Calu3 (cell line): ENCODE measurements at regions of chr3 and their contacts with region 1.

Region 1: GRCh38 chr3:31377045-31377642 is 155.6 kb upstream of the STT3B start:
- DNase-seq: peak; percentile 69
- H3K4me3 Mint-ChIP-seq: no peak overlapping the region
- H3K27ac Mint-ChIP-seq: peak overlapping the region; percentile 3
- H3K4me1 Mint-ChIP-seq: peaks cover 24% of the 10 kb centered on the region
- H3K27me3 Mint-ChIP-seq: no peaks in the 10 kb centered on the region
- CTCF ChIP-seq: no peak

Region 2: DNA sequence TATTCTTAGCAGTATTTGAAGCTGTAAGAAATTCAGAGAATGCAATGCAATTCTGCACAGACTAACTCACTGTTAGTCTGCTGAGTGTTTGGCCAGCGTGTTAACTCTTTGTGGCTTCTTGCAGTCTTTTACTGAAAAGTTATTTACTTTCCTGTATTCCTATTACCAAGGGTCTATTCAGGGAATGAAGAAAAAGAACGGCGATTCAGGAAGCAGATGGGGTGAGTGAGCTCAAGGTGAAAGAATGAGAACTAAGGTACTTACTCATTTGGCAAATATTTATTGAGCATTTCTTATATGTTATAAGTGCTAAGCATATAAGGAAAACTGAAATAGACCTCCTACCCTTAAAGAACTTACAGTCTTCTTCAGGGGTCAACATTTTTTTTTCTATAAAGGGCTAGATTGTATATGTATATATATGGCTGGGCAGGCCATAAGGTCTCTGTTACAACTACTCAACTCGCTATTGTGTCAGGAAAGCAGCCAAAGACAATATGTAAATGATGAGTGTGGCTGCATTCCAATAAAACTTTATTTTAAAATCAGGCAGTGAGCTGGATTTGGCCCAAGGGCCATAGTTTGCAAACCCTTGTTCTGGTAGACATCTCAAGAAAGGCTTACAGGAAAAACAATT is 210.8 kb before region 1 on chr3:
- CTCF ChIA-PET with region 1: no interaction called
- intact Hi-C with region 1: loop called (anchors 10 kb)
- DNase-seq: peak; percentile 22
- H3K4me3 Mint-ChIP-seq: no peak overlapping the region
- H3K27ac Mint-ChIP-seq: no peak overlapping the region
- H3K4me1 Mint-ChIP-seq: peaks cover 25% of the 10 kb centered on the region
- H3K27me3 Mint-ChIP-seq: no peaks in the 10 kb centered on the region
- CTCF ChIP-seq: no peak

Region 3: GRCh38 chr3:31288641-31289100 is 88.5 kb before region 1 on chr3:
- CTCF ChIA-PET with region 1: interaction called, 16 read pairs
- intact Hi-C with region 1: no loop called
- DNase-seq: peak; percentile 80
- H3K4me3 Mint-ChIP-seq: peak overlapping the region; percentile 4
- H3K27ac Mint-ChIP-seq: peak overlapping the region; percentile 39
- H3K4me1 Mint-ChIP-seq: peaks cover 54% of the 10 kb centered on the region
- H3K27me3 Mint-ChIP-seq: no peaks in the 10 kb centered on the region
- CTCF ChIP-seq: no peak

Region 4: DNA sequence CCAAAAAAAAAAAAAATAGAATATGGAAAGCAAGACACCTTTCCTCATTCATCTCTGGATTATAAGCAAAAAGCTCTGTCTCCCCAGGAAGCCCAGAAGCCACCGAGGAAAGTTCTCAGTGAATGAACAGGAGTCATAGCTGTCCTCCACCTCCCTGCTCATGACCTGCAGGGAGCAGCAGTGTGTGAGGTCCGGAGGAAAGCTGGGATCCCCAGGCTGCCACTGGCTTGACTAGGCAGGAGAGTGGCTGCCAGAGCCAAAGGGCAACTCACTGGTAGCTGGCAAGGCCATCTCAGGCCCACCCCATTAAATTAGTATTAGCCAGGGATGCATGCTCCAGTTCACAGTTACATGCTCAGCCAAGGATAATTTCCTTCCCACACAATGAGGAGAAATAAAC is 36.0 kb before region 1 on chr3:
- CTCF ChIA-PET with region 1: no interaction called
- intact Hi-C with region 1: no loop called
- DNase-seq: peak; percentile 9
- H3K4me3 Mint-ChIP-seq: no peak overlapping the region
- H3K27ac Mint-ChIP-seq: no peak overlapping the region
- H3K4me1 Mint-ChIP-seq: no peaks in the 10 kb centered on the region
- H3K27me3 Mint-ChIP-seq: no peaks in the 10 kb centered on the region
- CTCF ChIP-seq: no peak

Region 5: GRCh38 chr3:31448035-31448881 is 71.1 kb after region 1 on chr3:
- CTCF ChIA-PET with region 1: no interaction called
- intact Hi-C with region 1: no loop called
- DNase-seq: peak; percentile 40
- H3K4me3 Mint-ChIP-seq: no peak overlapping the region
- H3K27ac Mint-ChIP-seq: no peak overlapping the region
- H3K4me1 Mint-ChIP-seq: peaks cover 7% of the 10 kb centered on the region
- H3K27me3 Mint-ChIP-seq: no peaks in the 10 kb centered on the region
- CTCF ChIP-seq: peak; percentile 61

Region 6: DNA sequence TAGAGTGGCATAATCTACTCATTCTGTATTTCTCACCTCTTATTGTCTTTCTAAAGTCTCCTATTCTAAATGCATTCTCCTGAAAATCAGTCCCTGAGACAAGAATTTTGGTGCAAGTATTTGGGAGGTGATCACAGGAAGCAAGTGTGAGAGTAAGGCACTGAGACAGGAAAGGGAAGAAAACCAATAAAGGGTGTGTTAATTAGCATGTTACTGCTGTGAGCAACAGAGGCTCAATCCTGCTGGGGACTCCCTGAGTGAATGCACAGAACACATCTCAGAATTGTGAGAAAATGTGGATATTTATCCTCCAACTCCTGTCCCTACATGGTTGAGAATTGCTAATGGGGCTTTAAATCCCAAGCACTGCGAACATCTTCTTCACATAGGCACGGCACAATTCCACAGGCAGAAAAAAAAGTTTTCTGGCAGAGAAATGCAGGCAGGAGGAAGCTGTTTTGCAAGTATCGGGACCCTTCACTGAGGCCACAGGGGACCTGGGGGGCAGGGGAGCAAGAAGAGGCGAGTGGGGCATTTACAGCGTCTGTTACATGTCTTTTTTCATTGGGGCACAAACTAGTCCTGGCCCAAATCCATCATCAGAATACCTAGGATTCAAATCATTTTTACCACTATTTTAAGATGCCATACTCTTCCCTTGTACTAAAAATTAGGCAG is 128.4 kb after region 1 on chr3:
- CTCF ChIA-PET with region 1: no interaction called
- intact Hi-C with region 1: no loop called
- DNase-seq: no peak
- H3K4me3 Mint-ChIP-seq: no peak overlapping the region
- H3K27ac Mint-ChIP-seq: no peak overlapping the region
- H3K4me1 Mint-ChIP-seq: no peaks in the 10 kb centered on the region
- H3K27me3 Mint-ChIP-seq: peaks cover 32% of the 10 kb centered on the region
- CTCF ChIP-seq: no peak

Region 7: GRCh38 chr3:31522152-31522551 is 145.0 kb after region 1 on chr3:
- CTCF ChIA-PET with region 1: no interaction called
- intact Hi-C with region 1: no loop called
- DNase-seq: no peak
- H3K4me3 Mint-ChIP-seq: no peak overlapping the region
- H3K27ac Mint-ChIP-seq: no peak overlapping the region
- H3K4me1 Mint-ChIP-seq: peaks cover 9% of the 10 kb centered on the region
- H3K27me3 Mint-ChIP-seq: no peaks in the 10 kb centered on the region
- CTCF ChIP-seq: no peak